ENCODE measurements at regions of chr3 and their contacts with region 1.

Region 1: GRCh38 chr3:194315088-194315964 is 35.8 kb downstream of the CPN2 start:
- DNase-seq: peak; percentile 69 to 85
- ATAC-seq: peak; percentile 85

Region 2: DNA sequence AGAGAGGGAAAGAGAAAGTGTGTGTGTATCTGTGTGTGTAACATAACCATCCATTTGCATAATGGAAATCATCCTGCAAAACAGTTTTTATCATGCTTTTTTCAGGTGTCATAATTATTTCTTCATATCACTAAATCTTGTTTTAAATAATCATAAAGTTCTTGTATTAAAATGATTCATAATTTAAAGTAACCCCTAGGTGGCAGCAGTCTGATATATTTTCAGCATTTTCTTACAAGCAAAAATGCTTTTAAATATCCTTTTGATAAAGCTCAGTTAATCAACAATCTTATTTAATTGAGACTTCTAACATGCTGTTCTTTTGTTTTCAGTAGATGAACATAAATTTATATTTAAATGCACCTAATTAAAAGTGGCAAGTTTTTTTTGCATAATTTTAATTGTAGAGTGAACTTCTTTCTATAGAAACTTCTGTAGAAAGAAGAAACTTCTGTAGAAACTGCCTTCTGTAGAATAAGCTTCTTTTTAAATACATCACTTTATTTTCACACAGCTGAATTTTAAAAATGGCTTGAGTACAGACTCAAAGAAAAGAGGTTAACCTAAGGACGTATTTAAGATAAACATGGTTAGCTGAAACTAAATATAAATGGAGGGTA is 649.8 kb before region 1 on chr3:
- intact Hi-C with region 1: loop called in 1 of 2 experiments (anchors 5 kb)
- DNase-seq: no peak
- ATAC-seq: no peak

Region 3: GRCh38 chr3:193780810-193781472 is 534.4 kb before region 1 on chr3:
- intact Hi-C with region 1: loop called (anchors 2 to 5 kb)
- DNase-seq: peak; percentile 66 to 75
- ATAC-seq: peak; percentile 73